ENCODE measurements at regions of chr2 and their contacts with region 1.

Region 1: DNA sequence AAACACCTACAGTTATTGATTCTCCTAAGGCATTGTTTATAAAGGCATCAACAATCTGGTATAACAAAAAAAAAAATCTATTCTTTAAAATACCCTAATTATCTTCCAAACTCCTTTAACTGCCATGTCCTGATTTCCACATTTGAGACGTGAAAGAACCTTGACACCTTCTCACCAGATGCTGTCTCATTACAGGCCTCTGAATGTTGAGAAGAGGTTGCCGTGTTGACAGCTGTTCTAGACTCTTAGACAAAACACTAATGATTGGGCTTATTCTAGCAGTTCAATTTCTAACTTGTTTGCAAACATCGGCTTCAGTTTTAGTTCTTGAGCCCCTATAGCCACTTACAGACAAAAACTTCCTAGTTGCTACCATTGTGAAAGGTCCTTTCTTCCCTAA is 988.8 kb downstream of the LRP1B start:
- DNase-seq: no peak

Region 2: DNA sequence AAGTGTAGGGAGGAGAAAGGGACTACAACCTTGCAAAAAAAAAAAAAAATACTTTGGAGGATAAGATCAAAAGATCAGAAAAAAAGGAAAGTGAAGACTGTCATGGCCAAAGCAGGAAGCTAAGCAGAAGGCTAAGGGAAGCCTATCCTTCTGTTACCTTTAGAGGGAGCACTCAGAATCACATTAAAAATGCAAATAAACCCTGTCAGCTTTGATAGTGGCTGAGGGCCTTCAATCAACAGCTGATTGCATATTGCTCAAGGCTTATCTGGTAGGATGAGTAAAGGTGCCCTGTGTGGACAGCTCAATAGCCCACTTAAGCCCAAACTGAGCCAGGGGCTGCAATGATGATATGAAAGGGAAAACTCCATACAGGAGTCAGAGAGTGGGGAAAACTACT is 32.4 kb before region 1 on chr2:
- intact Hi-C with region 1: no loop called
- DNase-seq: no peak

Region 3: DNA sequence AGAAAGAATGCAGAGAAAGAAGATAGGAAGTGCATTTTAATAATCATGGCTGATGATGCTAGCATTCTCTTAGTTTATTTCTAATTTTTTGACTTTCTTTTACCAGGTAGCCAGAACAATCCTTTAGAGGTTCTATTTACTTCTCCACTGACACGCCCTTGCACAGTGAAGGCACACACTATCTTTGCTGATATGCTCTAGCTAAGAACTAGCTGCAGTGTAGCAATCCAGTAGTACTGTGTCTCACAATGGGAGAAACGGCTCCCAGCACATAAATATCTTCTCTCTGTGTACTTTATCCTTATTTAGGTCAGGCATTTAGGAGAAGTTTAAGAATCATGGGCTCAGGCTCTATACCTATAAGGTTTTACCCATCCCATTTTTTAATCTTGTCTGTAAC is 16.6 kb before region 1 on chr2:
- intact Hi-C with region 1: loop called in 1 of 2 experiments (anchors 1 kb)
- DNase-seq: no peak

Region 4: DNA sequence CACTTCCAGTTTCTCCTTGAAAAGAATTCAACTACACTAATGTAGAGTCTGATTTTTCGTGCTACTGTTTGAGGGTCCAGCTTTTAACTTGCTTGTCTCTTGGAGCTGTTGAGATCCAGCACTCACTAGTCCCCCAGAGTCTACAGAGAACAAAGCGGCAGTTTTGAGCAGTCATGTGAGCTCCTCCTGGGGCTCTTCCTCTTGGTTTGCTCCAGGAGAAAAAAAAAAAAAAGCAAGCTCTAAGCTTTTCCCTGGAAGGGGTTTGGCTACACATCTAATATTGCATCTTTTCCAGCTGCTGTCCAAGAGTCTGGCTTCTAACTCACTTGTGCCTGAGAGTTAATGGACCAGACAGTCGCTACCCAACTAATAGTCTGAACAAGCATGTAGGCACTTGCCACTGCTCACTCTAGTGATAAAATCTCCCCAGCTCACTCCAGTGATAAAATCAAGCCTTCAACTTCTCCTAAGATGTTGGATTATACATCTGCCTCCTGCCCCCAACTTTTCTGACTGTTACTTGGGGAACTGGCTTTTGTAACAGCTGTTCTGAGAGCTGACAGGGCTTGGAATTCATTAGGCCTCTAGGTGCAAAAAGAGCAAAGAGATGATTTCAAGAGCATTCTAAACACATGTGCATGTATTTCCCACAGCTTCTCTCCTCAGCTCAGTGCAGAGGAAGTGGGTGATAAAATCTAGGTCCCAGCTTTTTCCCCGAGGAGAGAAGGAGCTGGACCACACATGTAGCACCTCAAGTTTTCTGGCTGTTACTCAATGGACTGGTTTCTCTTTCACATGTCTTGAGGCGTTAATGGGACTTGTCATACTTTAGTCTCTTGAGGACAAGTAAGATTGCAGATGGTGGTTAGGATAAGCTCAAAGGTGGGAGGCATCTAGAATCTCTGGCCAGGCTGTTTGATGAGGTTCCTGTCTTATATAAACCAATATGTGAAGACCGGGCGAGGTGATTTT is 238.3 kb after region 1 on chr2:
- intact Hi-C with region 1: no loop called
- DNase-seq: no peak

Measured in posterior vena cava (tissue), 2 donors.